ENCODE measurements at regions of chr1 and their contacts with region 1.

Region 1: GRCh38 chr1:203888807-203889251 is 27.4 kb downstream of the SNRPE start:
- DNase-seq: peak; percentile 77
- H3K4me3 Mint-ChIP-seq: peak overlapping the region; percentile 11
- H3K27ac Mint-ChIP-seq: peak overlapping the region; percentile 98
- H3K4me1 Mint-ChIP-seq: peaks cover 27% of the 10 kb centered on the region
- H3K27me3 Mint-ChIP-seq: no peaks in the 10 kb centered on the region
- CTCF ChIP-seq: no peak

Region 2: GRCh38 chr1:203906932-203907331 is 18.1 kb after region 1 on chr1:
- CTCF ChIA-PET with region 1: no interaction called
- POLR2A ChIA-PET with region 1: interaction called, 6 read pairs
- intact Hi-C with region 1: loop called (anchors 1 kb)
- DNase-seq: peak; percentile 99
- H3K4me3 Mint-ChIP-seq: no peak overlapping the region
- H3K27ac Mint-ChIP-seq: peak overlapping the region; percentile 60
- H3K4me1 Mint-ChIP-seq: peaks cover 19% of the 10 kb centered on the region
- H3K27me3 Mint-ChIP-seq: no peaks in the 10 kb centered on the region
- CTCF ChIP-seq: no peak

Region 3: DNA sequence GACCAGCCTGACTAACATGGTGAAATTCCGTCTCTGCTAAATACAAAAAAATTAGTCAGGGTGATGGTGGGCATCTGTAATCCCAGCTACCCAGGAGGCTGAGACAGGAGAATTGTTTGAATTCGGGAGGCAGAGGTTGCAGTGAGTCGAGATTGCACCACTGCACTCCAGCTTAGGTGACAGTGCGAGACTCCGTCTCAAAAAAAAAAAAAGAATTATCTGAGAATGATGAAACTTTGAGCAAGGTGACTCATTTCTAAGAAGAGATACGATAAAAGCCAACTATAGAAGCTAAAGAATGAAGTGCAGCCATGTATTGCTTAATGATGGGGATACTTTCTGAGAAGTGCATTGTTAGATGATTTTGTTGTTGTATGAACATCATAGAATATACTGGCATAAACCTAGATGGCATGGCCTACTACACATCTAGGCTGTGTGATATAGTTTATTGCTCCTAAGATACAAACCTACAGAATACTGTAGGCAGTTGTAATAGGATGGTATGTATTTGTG is 37.3 kb after region 1 on chr1:
- CTCF ChIA-PET with region 1: interaction called, 4 read pairs
- POLR2A ChIA-PET with region 1: interaction called, 3 read pairs
- intact Hi-C with region 1: loop called (anchors 2 kb)
- DNase-seq: peak; percentile 85
- H3K4me3 Mint-ChIP-seq: no peak overlapping the region
- H3K27ac Mint-ChIP-seq: peak overlapping the region; percentile 57
- H3K4me1 Mint-ChIP-seq: peaks cover 21% of the 10 kb centered on the region
- H3K27me3 Mint-ChIP-seq: no peaks in the 10 kb centered on the region
- CTCF ChIP-seq: no peak

Region 4: GRCh38 chr1:204025917-204026707 is 137.3 kb after region 1 on chr1:
- CTCF ChIA-PET with region 1: no interaction called
- POLR2A ChIA-PET with region 1: no interaction called
- intact Hi-C with region 1: no loop called
- DNase-seq: no peak
- H3K4me3 Mint-ChIP-seq: no peak overlapping the region
- H3K27ac Mint-ChIP-seq: no peak overlapping the region
- H3K4me1 Mint-ChIP-seq: no peaks in the 10 kb centered on the region
- H3K27me3 Mint-ChIP-seq: peaks cover 31% of the 10 kb centered on the region
- CTCF ChIP-seq: no peak

Region 5: GRCh38 chr1:204059970-204060369 is 171.1 kb after region 1 on chr1:
- CTCF ChIA-PET with region 1: no interaction called
- POLR2A ChIA-PET with region 1: no interaction called
- intact Hi-C with region 1: loop called (anchors 1 kb)
- DNase-seq: no peak
- H3K4me3 Mint-ChIP-seq: no peak overlapping the region
- H3K27ac Mint-ChIP-seq: no peak overlapping the region
- H3K4me1 Mint-ChIP-seq: peaks cover 21% of the 10 kb centered on the region
- H3K27me3 Mint-ChIP-seq: no peaks in the 10 kb centered on the region
- CTCF ChIP-seq: no peak

Region 6: DNA sequence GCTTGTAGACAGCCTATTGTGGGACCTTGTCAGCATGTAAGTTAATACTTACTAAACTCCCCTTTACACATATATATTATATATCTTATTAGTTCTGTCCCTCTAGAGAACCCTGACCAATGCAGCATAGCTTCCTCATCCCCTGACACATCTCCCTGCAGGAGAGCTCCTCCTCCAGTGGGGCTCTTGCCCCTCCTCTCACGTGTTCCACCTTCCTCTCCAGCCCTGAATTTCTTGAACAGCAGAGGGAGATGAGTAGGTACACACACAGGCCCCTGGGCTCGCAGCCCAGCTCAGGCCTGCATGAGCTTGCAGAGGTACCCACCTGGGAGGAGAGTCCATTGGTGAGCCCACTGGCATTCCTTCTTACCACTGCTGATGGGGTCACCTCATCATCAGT is 352.2 kb after region 1 on chr1:
- CTCF ChIA-PET with region 1: no interaction called
- POLR2A ChIA-PET with region 1: no interaction called
- intact Hi-C with region 1: no loop called
- DNase-seq: peak; percentile 20
- H3K4me3 Mint-ChIP-seq: no peak overlapping the region
- H3K27ac Mint-ChIP-seq: no peak overlapping the region
- H3K4me1 Mint-ChIP-seq: no peaks in the 10 kb centered on the region
- H3K27me3 Mint-ChIP-seq: no peaks in the 10 kb centered on the region
- CTCF ChIP-seq: no peak